ENCODE measurements at regions of chr5 and their contacts with region 1.

Region 1: GRCh38 chr5:67003935-67004729 is 192.5 kb downstream of the CD180 start:
- DNase-seq: peak; percentile 85 to 88
- H3K4me3 ChIP-seq: peak overlapping the region; percentile 16 to 29 (median 29)
- H3K27ac ChIP-seq: peak overlapping the region; percentile 69 to 87 (median 84)
- H3K4me1 ChIP-seq: peaks cover 28 to 47% of the 10 kb centered on the region in 2 donors
- H3K27me3 ChIP-seq: no peaks in the 10 kb centered on the region
- CTCF ChIP-seq: no peak
- POLR2A ChIP-seq: peak in 1 of 2 donors; percentile 81

Region 2: DNA sequence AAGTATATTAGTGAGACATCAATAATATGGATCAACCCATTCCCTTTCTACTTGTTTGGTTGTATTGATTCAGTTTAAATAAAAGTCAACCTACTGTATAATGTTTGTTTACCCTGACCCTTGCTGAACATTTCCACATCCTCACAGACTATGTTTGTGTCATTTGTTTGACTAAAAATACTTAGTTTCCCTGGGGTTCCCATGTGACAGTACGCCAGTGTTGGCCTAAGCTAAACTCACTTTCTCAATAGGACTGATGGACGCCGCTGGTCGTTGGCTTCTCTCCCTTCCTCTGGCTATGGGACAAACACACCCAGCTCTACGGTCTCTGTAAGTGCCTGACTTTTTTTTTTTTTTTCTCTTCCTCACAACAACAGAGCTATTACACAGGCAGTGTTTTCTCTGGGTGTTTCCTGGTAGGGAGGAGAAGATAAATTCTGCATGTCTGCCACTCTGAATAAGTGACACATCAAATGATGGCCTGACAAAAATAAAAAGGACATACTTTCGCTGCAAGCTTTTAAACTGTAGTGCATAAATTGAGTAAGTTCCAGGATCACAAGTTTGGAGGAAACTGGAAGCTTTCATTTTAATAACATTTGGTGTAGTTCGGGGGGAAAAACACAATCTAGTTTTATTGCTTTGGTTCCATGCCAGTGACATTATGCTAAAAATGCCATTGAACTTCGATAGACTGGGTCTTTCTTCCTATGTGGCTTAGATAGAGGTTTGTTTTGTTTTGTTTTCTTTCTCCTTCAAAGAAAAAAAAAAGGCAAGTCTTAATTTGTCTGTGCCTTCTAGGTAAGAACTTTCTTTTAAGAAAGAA is 91.4 kb after region 1 on chr5:
- intact Hi-C with region 1: loop called (anchors 10 kb)
- DNase-seq: peak; percentile 74 to 76
- H3K4me3 ChIP-seq: no peak overlapping the region
- H3K27ac ChIP-seq: peak overlapping the region; percentile 67 to 97 (median 86)
- H3K4me1 ChIP-seq: peaks cover 45 to 49% of the 10 kb centered on the region in 2 donors
- H3K27me3 ChIP-seq: no peaks in the 10 kb centered on the region
- CTCF ChIP-seq: no peak
- POLR2A ChIP-seq: no peak

Measured in thyroid gland (tissue), 4 donors.